ENCODE measurements at regions of chr17 and their contacts with region 1.

Region 1: GRCh38 chr17:38853292-38854219 is at the start of gene RPL23:
- DNase-seq: peak; percentile 96
- ATAC-seq: peak; percentile 87
- H3K4me3 Mint-ChIP-seq: peak within 1 kb of the TSS; percentile 99
- H3K27ac Mint-ChIP-seq: peak within 1 kb of the TSS; percentile 99
- H3K4me1 Mint-ChIP-seq: peaks cover 46% of the 10 kb centered on the region
- H3K27me3 Mint-ChIP-seq: no peaks in the 10 kb centered on the region
- total RNA-seq, gene RPL23: 1,886 to 1,896 TPM

Region 2: GRCh38 chr17:38824899-38825761 is 28.4 kb before region 1 on chr17 and contains the start of gene CWC25:
- CTCF ChIA-PET with region 1: interaction called, 9 read pairs
- POLR2A ChIA-PET with region 1: interaction called, 7 read pairs
- intact Hi-C with region 1: loop called (anchors 1 kb)
- DNase-seq: peak; percentile 95
- ATAC-seq: peak; percentile 82
- H3K4me3 Mint-ChIP-seq: peak within 1 kb of the TSS; percentile 99
- H3K27ac Mint-ChIP-seq: peak within 1 kb of the TSS; percentile 99
- H3K4me1 Mint-ChIP-seq: peaks cover 27% of the 10 kb centered on the region
- H3K27me3 Mint-ChIP-seq: no peaks in the 10 kb centered on the region
- total RNA-seq, gene CWC25: 23.3 to 24.0 TPM

Region 3: DNA sequence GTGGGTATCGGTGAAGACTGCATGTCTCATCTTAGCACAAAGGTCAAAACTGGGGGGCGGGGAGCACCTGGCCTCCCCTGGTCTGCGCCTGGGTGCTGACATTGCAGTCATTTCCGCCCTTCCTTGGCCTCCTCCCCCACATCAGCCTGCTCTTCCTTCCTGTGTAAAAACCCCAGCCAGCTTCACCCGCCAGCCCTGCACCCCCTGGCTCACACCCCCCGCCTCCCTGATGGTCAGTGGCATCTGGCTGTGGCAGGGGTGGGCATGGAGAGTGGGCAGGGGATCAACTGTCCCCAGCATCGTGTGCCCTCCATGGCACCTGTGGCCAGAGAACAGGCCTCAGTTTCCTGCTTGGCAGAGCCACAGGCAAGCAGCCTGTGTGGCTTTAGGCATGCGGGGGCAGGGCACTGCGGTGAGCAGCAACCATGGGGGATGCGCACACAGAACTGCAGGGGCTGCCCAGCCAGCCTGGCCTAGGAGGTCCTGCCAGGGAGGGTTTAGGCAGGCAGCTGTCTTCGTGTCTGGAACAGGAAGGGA is 45.3 kb after region 1 on chr17:
- CTCF ChIA-PET with region 1: interaction called, 3 read pairs
- POLR2A ChIA-PET with region 1: interaction called, 8 read pairs
- intact Hi-C with region 1: loop called in 1 of 2 experiments (anchors 1 kb)
- DNase-seq: peak; percentile 95
- ATAC-seq: peak; percentile 91
- H3K4me3 Mint-ChIP-seq: peak overlapping the region; percentile 70
- H3K27ac Mint-ChIP-seq: peak overlapping the region; percentile 98
- H3K4me1 Mint-ChIP-seq: peaks cover 65% of the 10 kb centered on the region
- H3K27me3 Mint-ChIP-seq: no peaks in the 10 kb centered on the region

Region 4: DNA sequence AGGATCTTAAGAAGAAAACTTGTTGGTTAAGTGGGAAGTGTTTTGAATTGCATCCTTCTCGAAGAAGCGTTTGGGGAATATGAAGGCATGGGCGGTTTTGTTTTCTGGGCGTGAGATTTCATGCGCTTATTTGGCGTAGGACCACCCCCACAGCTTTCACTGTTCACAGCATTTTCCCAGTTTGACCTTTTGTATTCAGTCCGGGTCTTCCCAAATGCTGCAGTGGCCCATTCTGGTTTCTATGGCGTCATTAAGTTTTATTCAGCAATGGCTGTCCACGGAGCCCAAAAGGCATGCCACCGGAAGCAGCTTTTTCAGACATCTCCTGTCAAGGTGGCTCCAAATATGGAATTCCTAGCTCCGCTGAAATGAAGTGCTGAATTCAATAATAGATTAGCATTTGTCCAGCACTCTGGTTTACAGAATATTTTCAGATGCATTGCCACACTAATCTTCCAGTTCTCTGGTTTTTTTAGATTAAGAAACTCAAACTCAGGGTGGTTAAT is 204.2 kb after region 1 on chr17:
- CTCF ChIA-PET with region 1: no interaction called
- POLR2A ChIA-PET with region 1: no interaction called
- intact Hi-C with region 1: loop called in 1 of 2 experiments (anchors 1 kb)
- DNase-seq: no peak
- ATAC-seq: no peak
- H3K4me3 Mint-ChIP-seq: peak overlapping the region; percentile 67
- H3K27ac Mint-ChIP-seq: no peak overlapping the region
- H3K4me1 Mint-ChIP-seq: peaks cover 15% of the 10 kb centered on the region
- H3K27me3 Mint-ChIP-seq: no peaks in the 10 kb centered on the region

Region 5: GRCh38 chr17:39110435-39111136 is 257.0 kb after region 1 on chr17:
- CTCF ChIA-PET with region 1: no interaction called
- POLR2A ChIA-PET with region 1: no interaction called
- intact Hi-C with region 1: no loop called
- DNase-seq: no peak
- ATAC-seq: no peak
- H3K4me3 Mint-ChIP-seq: no peak overlapping the region
- H3K27ac Mint-ChIP-seq: no peak overlapping the region
- H3K4me1 Mint-ChIP-seq: no peaks in the 10 kb centered on the region
- H3K27me3 Mint-ChIP-seq: no peaks in the 10 kb centered on the region

Region 6: DNA sequence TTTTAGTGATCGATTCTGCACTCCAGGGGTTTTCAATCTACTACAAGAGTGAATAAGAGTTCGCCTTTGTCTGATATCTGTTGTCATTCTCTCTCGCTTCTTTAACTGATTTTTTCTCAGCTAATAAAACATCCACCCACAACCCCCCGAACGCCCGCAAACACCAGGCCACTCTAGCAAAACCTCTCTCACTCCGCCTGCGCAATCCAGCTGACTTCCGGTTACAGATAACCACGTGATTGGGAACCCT is 346.2 kb after region 1 on chr17:
- CTCF ChIA-PET with region 1: no interaction called
- POLR2A ChIA-PET with region 1: no interaction called
- intact Hi-C with region 1: loop called in 1 of 2 experiments (anchors 1 kb)
- DNase-seq: peak; percentile 95
- ATAC-seq: peak; percentile 69
- H3K4me3 Mint-ChIP-seq: peak overlapping the region; percentile 98
- H3K27ac Mint-ChIP-seq: peak overlapping the region; percentile 100
- H3K4me1 Mint-ChIP-seq: peaks cover 51% of the 10 kb centered on the region
- H3K27me3 Mint-ChIP-seq: no peaks in the 10 kb centered on the region

Measured in activated CD4-positive, alpha-beta T cell treated with anti-CD3 and anti-CD28 coated beads for 36 hours (primary cell).